HEK293T (cell line): ENCODE measurements at regions of chr2 and their contacts with region 1.

Region 1: GRCh38 chr2:113203901-113204519 is 30.2 kb downstream of the PSD4 start:
- DNase-seq: peak; percentile 83

Region 2: DNA sequence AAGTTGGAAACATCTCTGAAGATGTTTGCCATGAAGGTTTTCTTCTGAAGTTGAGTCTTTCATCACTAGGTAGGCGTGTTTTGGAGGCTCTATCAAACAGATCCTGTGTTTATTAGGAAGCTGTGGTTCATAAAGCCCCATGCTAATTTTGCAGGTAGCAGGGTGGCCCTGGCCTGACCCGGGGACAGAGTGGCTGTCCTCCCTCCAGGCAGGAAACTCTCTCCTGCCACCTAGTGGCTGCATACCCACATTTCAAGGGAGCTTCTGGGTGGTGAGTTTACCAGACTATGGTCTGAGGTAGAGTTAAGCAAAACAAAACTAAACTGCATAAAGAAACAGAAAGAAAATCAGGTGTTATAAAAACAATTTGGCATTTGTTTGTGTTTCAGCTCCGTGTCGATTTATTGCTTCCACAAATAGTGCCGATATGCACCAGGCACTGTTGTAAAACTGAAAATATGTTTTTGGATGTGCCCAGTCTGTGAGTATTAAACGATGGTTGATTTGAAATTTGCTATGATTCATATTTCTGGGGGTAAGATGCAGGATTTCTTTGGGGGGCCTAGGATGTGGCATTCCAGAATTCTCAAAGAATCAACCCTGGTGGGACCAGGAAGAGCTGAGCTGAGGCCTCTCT is 319.0 kb before region 1 on chr2:
- CTCF ChIA-PET with region 1: no interaction called
- POLR2A ChIA-PET with region 1: no interaction called
- DNase-seq: peak; percentile 70

Region 3: DNA sequence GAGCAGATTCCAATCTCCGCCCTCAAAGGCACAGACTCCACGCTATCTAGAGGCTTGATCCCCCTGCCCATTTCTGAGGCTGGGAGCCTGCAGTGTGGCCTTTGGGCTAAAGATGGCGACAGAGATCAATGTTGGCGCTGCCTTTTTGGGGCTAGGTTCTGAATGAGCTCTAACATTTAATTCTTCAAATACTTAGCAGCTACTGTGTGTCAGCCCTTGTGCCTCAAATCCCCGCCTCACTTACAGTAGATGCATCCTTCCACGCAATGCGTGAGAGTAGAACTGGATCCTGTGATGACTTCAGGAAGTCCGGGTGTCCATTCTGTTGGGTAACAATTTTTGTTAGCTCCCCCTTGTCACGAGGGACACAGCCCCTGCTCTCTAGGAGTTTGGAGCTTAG is 123.9 kb before region 1 on chr2:
- CTCF ChIA-PET with region 1: interaction called, 31 read pairs
- POLR2A ChIA-PET with region 1: interaction called, 8 read pairs
- DNase-seq: peak; percentile 65

Region 4: DNA sequence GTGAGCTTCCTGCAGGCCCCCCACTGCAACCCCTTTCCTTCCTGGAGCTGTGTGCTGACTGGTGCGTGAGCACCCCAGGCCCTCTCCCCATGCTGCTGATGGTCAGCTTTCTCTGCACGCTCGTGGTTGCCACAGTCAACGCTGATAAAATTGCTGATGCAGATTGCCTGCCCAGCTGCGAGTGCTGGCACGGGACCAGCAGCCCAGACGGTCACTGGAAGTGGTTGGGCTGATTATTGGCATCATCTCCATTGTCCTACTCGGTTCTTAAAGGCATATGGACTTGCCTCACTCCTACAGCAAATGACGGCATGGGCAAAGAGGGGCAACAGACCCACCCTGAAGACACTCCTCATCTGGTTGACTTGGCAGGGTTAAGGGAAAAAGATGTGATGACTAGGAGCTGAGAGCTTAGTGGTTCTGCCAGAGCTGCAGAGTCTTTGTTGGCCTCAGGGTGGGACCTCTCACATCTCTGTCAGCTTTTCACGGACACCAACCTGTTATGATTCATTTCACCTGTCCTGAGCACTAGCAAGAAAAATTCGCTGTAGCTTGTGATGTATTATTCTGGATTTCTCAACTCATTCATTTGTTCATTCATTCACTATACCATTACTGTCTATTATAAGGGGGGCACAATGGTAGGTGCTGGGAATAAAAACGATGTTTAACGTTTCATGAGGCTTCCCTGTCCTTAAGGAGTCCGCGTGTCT is 36.3 kb after region 1 on chr2:
- CTCF ChIA-PET with region 1: interaction called, 13 read pairs
- POLR2A ChIA-PET with region 1: interaction called, 3 read pairs
- DNase-seq: no peak

Region 5: DNA sequence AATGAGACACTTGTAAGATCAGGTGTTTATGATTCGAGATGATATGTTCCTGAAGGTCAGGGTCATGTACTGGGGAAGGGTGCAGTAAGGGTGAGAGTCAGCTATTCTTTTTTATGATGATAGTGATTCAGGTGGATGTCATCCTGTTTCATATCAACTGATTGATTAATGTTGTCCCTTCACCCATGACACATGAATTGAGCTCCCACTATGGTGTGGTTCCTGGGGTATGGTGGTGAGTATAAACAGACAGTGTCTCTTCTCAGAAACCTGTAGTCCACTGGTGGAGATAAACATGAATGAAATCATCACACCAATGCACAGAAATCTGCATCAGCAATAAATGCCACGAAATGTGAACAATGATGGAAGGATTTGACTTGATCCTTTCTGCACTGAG is 112.1 kb after region 1 on chr2:
- CTCF ChIA-PET with region 1: no interaction called
- POLR2A ChIA-PET with region 1: no interaction called
- DNase-seq: no peak

Region 6: GRCh38 chr2:113390124-113390849 is 186.3 kb after region 1 on chr2:
- CTCF ChIA-PET with region 1: interaction called, 35 read pairs
- POLR2A ChIA-PET with region 1: no interaction called
- DNase-seq: peak; percentile 60